ENCODE measurements at regions of chr11 and their contacts with region 1.

Region 1: GRCh38 chr11:112564228-112564955 is 303.7 kb upstream of the PLET1 start:
- DNase-seq: no peak

Region 2: DNA sequence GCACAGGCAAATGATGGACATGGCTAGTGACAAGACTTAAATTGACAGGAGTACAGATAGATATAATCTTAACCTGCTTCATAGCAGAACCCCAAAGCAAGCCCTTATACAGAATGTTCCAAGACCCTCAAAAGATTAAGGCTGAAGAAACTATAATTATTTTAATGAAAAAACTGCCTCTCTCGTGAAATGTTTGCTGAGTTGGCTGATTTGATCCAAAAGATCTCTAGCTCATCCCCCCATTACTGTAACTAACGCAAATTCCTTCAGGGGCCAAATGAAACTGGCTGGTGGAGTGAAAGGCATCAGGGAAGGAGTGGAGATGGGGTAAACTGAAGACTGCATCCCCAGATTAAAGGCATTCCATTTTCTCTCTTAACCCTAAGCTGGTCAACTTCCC is 712.3 kb before region 1 on chr11:
- CTCF ChIA-PET with region 1: interaction called, 10 read pairs
- POLR2A ChIA-PET with region 1: no interaction called
- DNase-seq: no peak

Measured in HEK293T (cell line).